ENCODE measurements at regions of chr16 and their contacts with region 1.

Region 1: GRCh38 chr16:22206013-22206841 is at the start of gene EEF2K:
- DNase-seq: peak; percentile 77
- H3K4me3 Mint-ChIP-seq: peak within 1 kb of the TSS; percentile 91
- H3K27ac Mint-ChIP-seq: peak within 1 kb of the TSS; percentile 91
- H3K4me1 Mint-ChIP-seq: peaks cover 27% of the 10 kb centered on the region
- H3K27me3 Mint-ChIP-seq: no peaks in the 10 kb centered on the region
- total RNA-seq, gene EEF2K: 28.3 and 30.5 TPM in 2 replicates

Region 2: DNA sequence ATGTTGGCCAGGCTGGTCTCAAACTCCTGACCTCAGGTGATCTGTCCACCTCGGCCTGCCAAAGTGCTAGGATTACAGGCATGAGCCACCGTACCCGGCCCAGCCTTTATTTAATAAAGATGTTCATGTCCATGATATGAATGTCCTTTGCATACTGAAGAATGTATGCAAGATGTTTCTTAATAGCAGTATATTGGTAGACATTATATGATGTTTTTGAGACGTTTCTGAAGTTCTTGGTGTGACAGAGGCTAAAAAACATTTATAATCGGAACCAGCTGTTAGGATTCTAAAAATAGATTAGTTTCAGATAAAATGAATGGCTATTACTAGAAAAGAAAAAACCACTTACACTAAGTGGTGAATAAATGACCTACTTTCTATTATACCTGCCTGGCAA is 217.1 kb before region 1 on chr16:
- intact Hi-C with region 1: no loop called
- DNase-seq: no peak
- H3K4me3 Mint-ChIP-seq: no peak overlapping the region
- H3K27ac Mint-ChIP-seq: no peak overlapping the region
- H3K4me1 Mint-ChIP-seq: peaks cover 15% of the 10 kb centered on the region
- H3K27me3 Mint-ChIP-seq: no peaks in the 10 kb centered on the region

Region 3: DNA sequence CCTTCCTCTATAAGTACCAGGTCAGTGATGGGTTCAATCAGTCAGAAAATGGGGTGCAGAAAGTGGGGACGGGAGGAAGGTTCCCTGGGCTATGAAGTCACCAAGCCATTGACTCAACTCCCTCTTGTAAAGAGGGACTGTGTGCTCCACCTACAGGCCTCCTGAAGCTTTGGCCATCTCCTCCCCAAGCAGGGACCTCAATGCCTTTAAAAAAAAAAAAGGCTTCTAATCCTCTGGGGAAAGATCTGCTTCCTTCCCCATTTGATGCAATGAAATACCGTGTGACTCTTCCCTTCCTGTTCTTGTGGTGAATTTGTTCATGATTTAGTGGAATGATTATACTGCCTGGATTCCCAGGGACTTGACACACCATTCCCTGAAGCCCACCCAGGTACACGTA is 83.1 kb before region 1 on chr16:
- intact Hi-C with region 1: no loop called
- DNase-seq: no peak
- H3K4me3 Mint-ChIP-seq: no peak overlapping the region
- H3K27ac Mint-ChIP-seq: peak overlapping the region; percentile 40
- H3K4me1 Mint-ChIP-seq: no peaks in the 10 kb centered on the region
- H3K27me3 Mint-ChIP-seq: peaks cover 7% of the 10 kb centered on the region

Region 4: DNA sequence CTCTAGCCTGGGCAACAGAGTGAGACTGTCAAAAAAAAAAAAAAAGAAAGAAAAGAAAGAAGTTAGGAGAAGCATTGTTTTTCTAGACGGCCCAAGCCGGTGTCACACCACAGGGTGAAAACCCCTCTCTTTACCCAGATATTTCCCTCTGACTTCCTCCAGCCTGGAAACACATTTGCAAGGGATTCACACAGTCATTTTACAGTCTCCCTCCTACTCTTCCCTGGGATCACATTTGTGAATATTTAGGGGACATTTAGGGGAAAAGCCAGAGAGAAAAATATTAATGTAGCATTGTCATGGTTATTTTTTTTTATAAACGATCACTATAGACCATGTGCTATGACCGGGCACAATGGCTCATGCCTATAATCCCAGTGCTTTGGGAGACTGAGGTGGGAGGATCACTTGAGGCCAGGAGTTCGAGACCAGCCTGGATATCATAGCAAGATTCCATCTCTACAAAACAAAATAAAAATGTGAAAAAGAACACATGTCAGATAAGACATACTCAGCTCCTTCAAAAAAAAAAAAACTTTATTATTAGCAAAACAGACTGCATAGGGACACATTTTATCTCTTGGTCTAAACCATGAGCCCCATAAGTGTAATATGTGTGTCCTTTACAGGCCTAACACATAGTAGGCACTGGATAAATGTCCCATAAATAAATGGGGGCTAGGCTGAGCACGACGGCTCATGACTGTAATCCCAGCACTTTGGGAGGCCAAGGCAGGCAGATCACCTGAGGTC is 54.8 kb before region 1 on chr16:
- intact Hi-C with region 1: no loop called
- DNase-seq: no peak
- H3K4me3 Mint-ChIP-seq: no peak overlapping the region
- H3K27ac Mint-ChIP-seq: no peak overlapping the region
- H3K4me1 Mint-ChIP-seq: no peaks in the 10 kb centered on the region
- H3K27me3 Mint-ChIP-seq: no peaks in the 10 kb centered on the region

Region 5: GRCh38 chr16:22232277-22233042 is 26.2 kb after region 1 on chr16:
- intact Hi-C with region 1: loop called (anchors 1 kb)
- DNase-seq: no peak
- H3K4me3 Mint-ChIP-seq: peak overlapping the region; percentile 13
- H3K27ac Mint-ChIP-seq: peak overlapping the region; percentile 14
- H3K4me1 Mint-ChIP-seq: peaks cover 13% of the 10 kb centered on the region
- H3K27me3 Mint-ChIP-seq: no peaks in the 10 kb centered on the region

Region 6: DNA sequence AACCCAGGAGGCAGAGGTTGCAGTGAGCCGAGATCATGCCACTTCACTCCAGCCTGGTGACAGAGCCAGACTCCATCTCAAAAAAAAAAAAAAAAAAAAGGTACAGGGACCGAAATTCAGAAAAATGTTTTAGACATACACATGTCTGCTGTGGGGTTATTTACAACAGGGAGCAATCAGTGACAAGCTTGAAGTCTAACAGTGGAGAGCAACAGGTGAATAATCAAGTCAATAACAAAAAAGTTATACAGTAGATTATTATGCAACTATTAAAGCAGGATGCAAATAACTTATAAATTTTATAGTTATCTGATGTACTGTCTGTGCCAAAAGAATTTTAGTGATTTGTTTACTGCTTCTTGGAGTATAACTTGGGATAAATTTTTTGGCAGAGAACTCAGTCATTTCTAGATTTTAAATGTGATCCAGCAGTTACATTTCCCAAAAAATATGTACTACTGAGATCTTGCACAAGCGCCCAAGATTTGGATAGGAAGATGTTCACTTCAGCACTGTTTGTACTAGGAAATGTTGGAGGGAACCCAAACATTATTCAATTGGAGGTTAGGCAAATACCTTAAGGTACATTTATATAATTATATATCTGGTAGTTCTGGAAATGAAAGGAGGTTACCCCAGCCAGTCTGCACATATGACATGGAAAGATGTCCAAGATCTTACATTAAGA is 33.9 kb after region 1 on chr16:
- intact Hi-C with region 1: loop called (anchors 2 kb)
- DNase-seq: no peak
- H3K4me3 Mint-ChIP-seq: no peak overlapping the region
- H3K27ac Mint-ChIP-seq: no peak overlapping the region
- H3K4me1 Mint-ChIP-seq: peaks cover 24% of the 10 kb centered on the region
- H3K27me3 Mint-ChIP-seq: no peaks in the 10 kb centered on the region